Vagina (tissue), 2 donors: ENCODE measurements at regions of chr10 and their contacts with region 1.

Region 1: GRCh38 chr10:949446-949845 is 17.9 kb upstream of the LARP4B start:
- DNase-seq: no peak
- H3K4me3 ChIP-seq: no peak overlapping the region
- H3K27ac ChIP-seq: no peak overlapping the region
- H3K4me1 ChIP-seq: peaks cover 7% of the 10 kb centered on the region
- H3K27me3 ChIP-seq: no peaks in the 10 kb centered on the region
- CTCF ChIP-seq: no peak
- POLR2A ChIP-seq: no peak

Region 2: DNA sequence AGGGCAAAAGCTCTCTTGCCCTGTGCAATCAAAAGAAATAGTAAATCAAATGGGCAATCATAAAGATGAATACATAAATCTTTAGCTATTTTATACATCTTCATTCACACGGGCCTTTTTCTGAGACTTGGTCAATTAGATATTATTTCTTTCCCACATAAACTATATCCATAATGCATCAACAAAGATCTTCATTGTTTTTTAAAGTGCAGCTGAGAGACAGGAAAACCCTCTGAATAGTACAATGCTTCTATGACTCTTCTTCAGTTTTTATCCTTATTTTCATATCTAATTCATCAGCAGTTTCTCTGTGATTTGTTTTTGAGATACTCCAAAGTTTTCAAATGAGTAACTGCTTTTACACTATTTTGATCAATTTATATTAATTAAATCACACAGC is 43.5 kb before region 1 on chr10:
- intact Hi-C with region 1: loop called (anchors 1 kb)
- DNase-seq: no peak
- H3K4me3 ChIP-seq: no peak overlapping the region
- H3K27ac ChIP-seq: no peak overlapping the region
- H3K4me1 ChIP-seq: no peaks in the 10 kb centered on the region
- H3K27me3 ChIP-seq: no peaks in the 10 kb centered on the region
- CTCF ChIP-seq: no peak
- POLR2A ChIP-seq: no peak